Activated CD8-positive, alpha-beta T cell treated with anti-CD3 and anti-CD28 coated beads for 36 hours (primary cell): ENCODE measurements at regions of chr2 and their contacts with region 1.

Region 1: GRCh38 chr2:203740780-203741281 is 34.4 kb downstream of the CD28 start:
- DNase-seq: peak; percentile 66
- ATAC-seq: peak; percentile 64
- H3K4me3 Mint-ChIP-seq: peak overlapping the region; percentile 54
- H3K27ac Mint-ChIP-seq: peak overlapping the region; percentile 99
- H3K4me1 Mint-ChIP-seq: peaks cover 88% of the 10 kb centered on the region
- H3K27me3 Mint-ChIP-seq: no peaks in the 10 kb centered on the region
- CTCF ChIP-seq: no peak

Region 2: GRCh38 chr2:203535784-203536585 is 204.8 kb before region 1 on chr2:
- CTCF ChIA-PET with region 1: no interaction called
- POLR2A ChIA-PET with region 1: no interaction called
- intact Hi-C with region 1: no loop called
- DNase-seq: no peak
- ATAC-seq: no peak
- H3K4me3 Mint-ChIP-seq: peak overlapping the region; percentile 72
- H3K27ac Mint-ChIP-seq: no peak overlapping the region
- H3K4me1 Mint-ChIP-seq: peaks cover 19% of the 10 kb centered on the region
- H3K27me3 Mint-ChIP-seq: peaks cover 34% of the 10 kb centered on the region
- CTCF ChIP-seq: no peak

Region 3: DNA sequence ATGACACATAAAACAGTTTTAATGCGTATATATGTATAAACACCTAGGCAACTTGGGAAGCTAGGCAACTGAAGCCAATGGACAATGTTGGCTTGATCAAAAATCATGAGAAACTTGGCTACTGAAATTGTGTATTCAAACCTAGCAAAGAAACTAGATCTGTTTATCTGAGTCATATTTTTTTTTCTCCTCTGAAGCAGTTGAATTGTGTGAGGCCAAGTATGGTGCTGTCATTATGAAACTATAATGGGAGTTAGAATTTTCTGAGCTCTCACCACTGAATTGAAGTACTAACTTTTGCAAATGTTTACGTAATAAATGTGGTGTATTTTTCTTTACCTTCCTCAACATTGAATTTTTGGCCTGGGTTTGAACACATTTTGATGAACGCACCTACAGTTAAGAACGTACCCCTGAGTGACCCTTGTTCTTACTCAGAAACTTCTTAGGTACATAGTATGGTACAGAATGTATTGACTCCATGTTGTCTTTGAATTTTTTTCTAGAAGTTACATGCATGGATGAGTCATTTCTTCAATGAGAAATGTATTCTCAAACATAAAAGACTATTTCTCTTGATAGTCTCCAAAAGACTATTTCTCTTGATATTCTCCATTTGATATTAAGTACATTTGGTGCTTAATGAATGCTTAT is 10.6 kb before region 1 on chr2:
- CTCF ChIA-PET with region 1: interaction called, 14 read pairs
- POLR2A ChIA-PET with region 1: interaction called, 66 read pairs
- intact Hi-C with region 1: loop called (anchors 1 kb)
- DNase-seq: no peak
- ATAC-seq: peak; percentile 63
- H3K4me3 Mint-ChIP-seq: peak overlapping the region; percentile 49
- H3K27ac Mint-ChIP-seq: peak overlapping the region; percentile 99
- H3K4me1 Mint-ChIP-seq: peaks cover 89% of the 10 kb centered on the region
- H3K27me3 Mint-ChIP-seq: no peaks in the 10 kb centered on the region
- CTCF ChIP-seq: no peak

Region 4: GRCh38 chr2:203758841-203759689 is 18.2 kb after region 1 on chr2:
- CTCF ChIA-PET with region 1: interaction called, 5 read pairs
- POLR2A ChIA-PET with region 1: interaction called, 21 read pairs
- intact Hi-C with region 1: no loop called
- DNase-seq: no peak
- ATAC-seq: no peak
- H3K4me3 Mint-ChIP-seq: no peak overlapping the region
- H3K27ac Mint-ChIP-seq: no peak overlapping the region
- H3K4me1 Mint-ChIP-seq: peaks cover 37% of the 10 kb centered on the region
- H3K27me3 Mint-ChIP-seq: no peaks in the 10 kb centered on the region
- CTCF ChIP-seq: no peak

Region 5: GRCh38 chr2:203782262-203782976 is 41.6 kb after region 1 on chr2:
- CTCF ChIA-PET with region 1: interaction called, 7 read pairs
- POLR2A ChIA-PET with region 1: interaction called, 6 read pairs
- intact Hi-C with region 1: loop called (anchors 5 kb)
- DNase-seq: peak; percentile 83
- ATAC-seq: peak; percentile 96
- H3K4me3 Mint-ChIP-seq: no peak overlapping the region
- H3K27ac Mint-ChIP-seq: peak overlapping the region; percentile 82
- H3K4me1 Mint-ChIP-seq: peaks cover 49% of the 10 kb centered on the region
- H3K27me3 Mint-ChIP-seq: no peaks in the 10 kb centered on the region
- CTCF ChIP-seq: peak; percentile 77

Region 6: DNA sequence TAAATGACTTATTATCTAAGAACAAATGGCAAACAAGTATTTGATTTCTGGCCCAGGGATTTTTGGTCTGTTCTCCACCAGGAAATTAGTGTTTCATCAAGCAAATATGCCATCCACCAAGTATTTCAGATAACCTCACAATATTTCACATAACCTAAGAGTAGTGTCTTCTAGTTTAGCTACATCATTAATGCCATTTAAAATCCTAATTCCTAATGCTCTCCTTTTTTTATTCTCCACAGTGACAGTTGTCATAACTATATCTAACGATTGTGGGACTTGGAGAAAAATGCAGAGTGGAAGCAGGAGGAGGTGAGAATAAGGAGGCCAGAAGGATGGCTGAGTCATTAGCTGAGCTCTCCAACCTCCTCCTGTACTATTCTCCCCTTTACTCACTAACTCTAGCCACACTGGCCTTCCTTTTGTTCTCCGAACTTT is 68.3 kb after region 1 on chr2:
- CTCF ChIA-PET with region 1: interaction called, 11 read pairs
- POLR2A ChIA-PET with region 1: interaction called, 35 read pairs
- intact Hi-C with region 1: loop called (anchors 1 kb)
- DNase-seq: no peak
- ATAC-seq: no peak
- H3K4me3 Mint-ChIP-seq: no peak overlapping the region
- H3K27ac Mint-ChIP-seq: no peak overlapping the region
- H3K4me1 Mint-ChIP-seq: peaks cover 92% of the 10 kb centered on the region
- H3K27me3 Mint-ChIP-seq: no peaks in the 10 kb centered on the region
- CTCF ChIP-seq: no peak